ENCODE measurements at regions of chr18 and their contacts with region 1.

Region 1: GRCh38 chr18:24014062-24014985 is at the start of gene TTC39C:
- DNase-seq: peak; percentile 76 to 88
- ATAC-seq: peak; percentile 75 to 84 (median 83)
- H3K4me3 ChIP-seq: peak within 1 kb of the TSS; percentile 72
- H3K4me3 Mint-ChIP-seq: peak within 1 kb of the TSS; percentile 99
- H3K27ac ChIP-seq: peak within 1 kb of the TSS; percentile 88
- H3K27ac Mint-ChIP-seq: peak within 1 kb of the TSS; percentile 92 to 93
- H3K4me1 ChIP-seq: peaks cover 68% of the 10 kb centered on the region
- H3K4me1 Mint-ChIP-seq: peaks cover 80 to 83% of the 10 kb centered on the region in 2 donors
- H3K27me3 ChIP-seq: no peaks in the 10 kb centered on the region
- H3K27me3 Mint-ChIP-seq: no peaks in the 10 kb centered on the region
- CTCF ChIP-seq: no peak
- total RNA-seq, gene TTC39C: 39.0 to 61.5 (median 44.3) TPM

Region 2: DNA sequence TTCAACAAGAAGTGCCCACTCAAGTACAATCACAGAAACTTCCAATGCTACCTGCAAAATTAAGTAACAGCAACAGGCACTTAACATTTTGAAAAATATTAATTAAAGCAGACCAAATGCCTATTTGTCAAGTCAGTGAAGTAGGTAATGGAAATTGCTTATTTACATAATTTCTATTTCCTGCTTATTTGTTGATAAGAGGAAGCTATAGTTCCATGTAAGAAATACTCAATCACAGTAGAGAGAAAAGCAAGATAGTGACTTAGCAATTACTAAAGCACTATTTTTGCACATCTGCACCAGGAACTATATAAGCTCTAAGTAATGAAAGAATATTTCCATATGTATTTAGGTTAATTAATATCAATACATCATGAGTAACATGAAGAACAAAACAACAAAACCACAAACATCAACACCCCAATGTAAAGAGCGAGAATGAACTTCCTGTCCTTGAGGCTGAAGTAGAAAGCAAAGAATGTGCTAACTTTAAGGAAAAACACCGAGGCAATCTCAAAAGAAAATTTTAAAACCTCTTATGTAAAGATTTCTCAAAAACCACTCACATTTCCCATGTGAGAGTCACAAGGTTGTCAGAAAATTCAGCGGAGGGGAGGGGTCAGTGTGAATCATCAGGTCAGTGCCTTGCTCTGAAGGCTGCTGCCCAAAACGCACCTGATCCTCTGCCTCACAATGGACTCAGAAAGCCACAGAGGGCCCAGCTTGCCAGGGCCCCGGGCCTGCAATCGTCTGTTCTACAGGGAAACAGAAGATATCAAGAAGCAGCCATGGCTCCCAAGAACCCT is 440.5 kb before region 1 on chr18:
- intact Hi-C with region 1: loop called (anchors 10 kb)
- DNase-seq: peak; percentile 49 to 65
- ATAC-seq: peak; percentile 52 to 67 (median 57)
- H3K4me3 ChIP-seq: no peak overlapping the region
- H3K4me3 Mint-ChIP-seq: peak overlapping the region; percentile 91
- H3K27ac ChIP-seq: peak overlapping the region; percentile 75
- H3K27ac Mint-ChIP-seq: peak overlapping the region; percentile 94 to 99
- H3K4me1 ChIP-seq: peaks cover 67% of the 10 kb centered on the region
- H3K4me1 Mint-ChIP-seq: peaks cover 68 to 76% of the 10 kb centered on the region in 2 donors
- H3K27me3 ChIP-seq: no peaks in the 10 kb centered on the region
- H3K27me3 Mint-ChIP-seq: no peaks in the 10 kb centered on the region
- CTCF ChIP-seq: no peak

Region 3: DNA sequence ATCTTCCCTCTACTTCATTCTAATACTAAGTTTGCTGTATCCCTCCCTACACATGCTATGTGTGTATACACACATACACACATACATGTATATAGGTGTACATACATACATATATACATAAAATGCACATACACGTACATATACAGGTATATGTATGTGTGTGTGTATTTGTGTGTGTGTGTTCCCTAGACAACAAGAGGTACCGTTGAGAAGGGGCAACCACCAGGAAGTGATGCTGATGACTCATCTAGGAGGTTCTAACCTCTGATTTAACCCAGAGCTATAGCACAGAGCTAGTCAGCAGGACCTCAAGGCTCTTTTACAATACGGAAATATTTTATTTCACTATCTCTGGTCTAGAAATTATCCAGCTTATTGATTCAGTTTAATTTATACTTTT is 185.9 kb before region 1 on chr18:
- intact Hi-C with region 1: loop called (anchors 5 kb)
- DNase-seq: peak; percentile 40 to 86
- ATAC-seq: peak; percentile 97 to 99 (median 98)
- H3K4me3 ChIP-seq: no peak overlapping the region
- H3K4me3 Mint-ChIP-seq: peak overlapping the region; percentile 22
- H3K27ac ChIP-seq: peak overlapping the region; percentile 67
- H3K27ac Mint-ChIP-seq: peak overlapping the region in 1 of 2 donors; percentile 90
- H3K4me1 ChIP-seq: no peaks in the 10 kb centered on the region
- H3K4me1 Mint-ChIP-seq: peaks cover 6 to 8% of the 10 kb centered on the region in 2 donors
- H3K27me3 ChIP-seq: no peaks in the 10 kb centered on the region
- H3K27me3 Mint-ChIP-seq: peaks cover 3 to 7% of the 10 kb centered on the region in 2 donors
- CTCF ChIP-seq: no peak

Region 4: GRCh38 chr18:23967321-23968089 is 46.8 kb before region 1 on chr18:
- intact Hi-C with region 1: loop called (anchors 5 kb)
- DNase-seq: peak; percentile 56 to 62
- ATAC-seq: peak; percentile 75 to 86 (median 77)
- H3K4me3 ChIP-seq: no peak overlapping the region
- H3K4me3 Mint-ChIP-seq: peak overlapping the region; percentile 47
- H3K27ac ChIP-seq: peak overlapping the region; percentile 43
- H3K27ac Mint-ChIP-seq: peak overlapping the region in 1 of 2 donors; percentile 61
- H3K4me1 ChIP-seq: peaks cover 52% of the 10 kb centered on the region
- H3K4me1 Mint-ChIP-seq: peaks cover 67 to 68% of the 10 kb centered on the region in 2 donors
- H3K27me3 ChIP-seq: no peaks in the 10 kb centered on the region
- H3K27me3 Mint-ChIP-seq: peaks cover 0 to 14% of the 10 kb centered on the region in 2 donors
- CTCF ChIP-seq: no peak

Region 5: GRCh38 chr18:23992089-23992940 is 22.0 kb before region 1 on chr18:
- intact Hi-C with region 1: loop called (anchors 2 kb)
- DNase-seq: peak in 1 of 2 donors; percentile 86
- ATAC-seq: peak; percentile 80 to 94 (median 84)
- H3K4me3 ChIP-seq: peak overlapping the region; percentile 25
- H3K4me3 Mint-ChIP-seq: no peak overlapping the region
- H3K27ac ChIP-seq: peak overlapping the region; percentile 72
- H3K27ac Mint-ChIP-seq: peak overlapping the region; percentile 64 to 81
- H3K4me1 ChIP-seq: peaks cover 14% of the 10 kb centered on the region
- H3K4me1 Mint-ChIP-seq: peaks cover 26 to 28% of the 10 kb centered on the region in 2 donors
- H3K27me3 ChIP-seq: no peaks in the 10 kb centered on the region
- H3K27me3 Mint-ChIP-seq: no peaks in the 10 kb centered on the region
- CTCF ChIP-seq: no peak

Region 6: DNA sequence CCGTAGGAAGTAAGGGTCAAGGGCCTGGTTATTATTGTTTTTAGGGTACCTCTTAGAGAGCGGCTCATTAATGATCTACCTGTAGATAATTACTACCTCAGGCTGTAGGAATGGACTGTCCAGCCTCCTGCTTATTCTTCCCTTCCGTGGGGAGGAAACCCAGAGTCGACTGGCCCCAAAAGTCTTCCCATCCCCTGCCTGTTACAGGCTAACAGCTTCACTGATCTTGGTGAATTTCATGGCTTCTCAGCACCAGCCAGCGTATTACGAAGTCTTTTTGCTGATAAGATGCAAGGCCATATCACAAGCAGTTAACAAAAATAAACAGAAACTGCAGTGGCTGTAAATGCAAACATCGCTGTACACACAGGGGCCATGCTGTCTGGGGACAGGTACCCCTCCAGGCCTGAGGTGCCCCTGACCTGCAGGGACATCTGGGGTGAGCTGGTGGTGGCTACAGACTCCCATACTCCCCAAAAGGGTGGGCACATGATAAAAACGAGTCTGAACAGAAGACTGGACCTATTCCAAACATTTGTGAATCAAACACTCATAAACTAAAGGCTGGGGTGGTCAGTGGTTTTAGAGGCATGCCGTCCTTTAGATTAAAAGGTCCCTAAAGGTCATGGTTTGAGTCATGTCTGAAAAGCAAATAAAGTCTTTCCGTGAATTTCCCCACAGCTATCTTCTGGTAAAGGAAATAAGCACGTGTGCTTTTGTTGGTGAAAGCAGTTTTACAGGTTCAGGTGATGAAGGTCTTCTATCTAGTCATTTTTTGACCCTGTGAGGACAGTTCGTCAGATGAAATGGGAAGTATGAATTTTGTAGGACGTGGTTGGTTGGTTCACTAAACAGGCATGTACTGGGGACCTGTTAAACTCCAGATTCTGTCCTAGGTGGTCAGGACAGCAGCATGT is 37.0 kb after region 1 on chr18:
- intact Hi-C with region 1: loop called (anchors 5 kb)
- DNase-seq: no peak
- ATAC-seq: no peak
- H3K4me3 ChIP-seq: no peak overlapping the region
- H3K4me3 Mint-ChIP-seq: no peak overlapping the region
- H3K27ac ChIP-seq: no peak overlapping the region
- H3K27ac Mint-ChIP-seq: peak overlapping the region in 1 of 2 donors; percentile 28
- H3K4me1 ChIP-seq: peaks cover 12% of the 10 kb centered on the region
- H3K4me1 Mint-ChIP-seq: peaks cover 57 to 62% of the 10 kb centered on the region in 2 donors
- H3K27me3 ChIP-seq: no peaks in the 10 kb centered on the region
- H3K27me3 Mint-ChIP-seq: no peaks in the 10 kb centered on the region
- CTCF ChIP-seq: no peak

Region 7: GRCh38 chr18:24118750-24119577 is 104.6 kb after region 1 on chr18:
- intact Hi-C with region 1: loop called (anchors 10 kb)
- DNase-seq: peak; percentile 66 to 94
- ATAC-seq: peak; percentile 90 to 91 (median 90)
- H3K4me3 ChIP-seq: no peak overlapping the region
- H3K4me3 Mint-ChIP-seq: no peak overlapping the region
- H3K27ac ChIP-seq: no peak overlapping the region
- H3K27ac Mint-ChIP-seq: no peak overlapping the region
- H3K4me1 ChIP-seq: peaks cover 8% of the 10 kb centered on the region
- H3K4me1 Mint-ChIP-seq: peaks cover 27 to 29% of the 10 kb centered on the region in 2 donors
- H3K27me3 ChIP-seq: no peaks in the 10 kb centered on the region
- H3K27me3 Mint-ChIP-seq: no peaks in the 10 kb centered on the region
- CTCF ChIP-seq: peak; percentile 95

Region 8: GRCh38 chr18:24631243-24632025 is 617.1 kb after region 1 on chr18:
- intact Hi-C with region 1: no loop called
- DNase-seq: no peak
- ATAC-seq: no peak
- H3K4me3 ChIP-seq: no peak overlapping the region
- H3K4me3 Mint-ChIP-seq: no peak overlapping the region
- H3K27ac ChIP-seq: no peak overlapping the region
- H3K27ac Mint-ChIP-seq: no peak overlapping the region
- H3K4me1 ChIP-seq: no peaks in the 10 kb centered on the region
- H3K4me1 Mint-ChIP-seq: no peaks in the 10 kb centered on the region
- H3K27me3 ChIP-seq: no peaks in the 10 kb centered on the region
- H3K27me3 Mint-ChIP-seq: peaks cover 6 to 15% of the 10 kb centered on the region in 2 donors
- CTCF ChIP-seq: no peak